ENCODE measurements at regions of chr10 and their contacts with region 1.

Region 1: GRCh38 chr10:114448897-114449296 is 44.6 kb upstream of the AFAP1L2 start:
- DNase-seq: no peak
- H3K4me3 ChIP-seq: no peak overlapping the region
- CTCF ChIP-seq: no peak

Region 2: DNA sequence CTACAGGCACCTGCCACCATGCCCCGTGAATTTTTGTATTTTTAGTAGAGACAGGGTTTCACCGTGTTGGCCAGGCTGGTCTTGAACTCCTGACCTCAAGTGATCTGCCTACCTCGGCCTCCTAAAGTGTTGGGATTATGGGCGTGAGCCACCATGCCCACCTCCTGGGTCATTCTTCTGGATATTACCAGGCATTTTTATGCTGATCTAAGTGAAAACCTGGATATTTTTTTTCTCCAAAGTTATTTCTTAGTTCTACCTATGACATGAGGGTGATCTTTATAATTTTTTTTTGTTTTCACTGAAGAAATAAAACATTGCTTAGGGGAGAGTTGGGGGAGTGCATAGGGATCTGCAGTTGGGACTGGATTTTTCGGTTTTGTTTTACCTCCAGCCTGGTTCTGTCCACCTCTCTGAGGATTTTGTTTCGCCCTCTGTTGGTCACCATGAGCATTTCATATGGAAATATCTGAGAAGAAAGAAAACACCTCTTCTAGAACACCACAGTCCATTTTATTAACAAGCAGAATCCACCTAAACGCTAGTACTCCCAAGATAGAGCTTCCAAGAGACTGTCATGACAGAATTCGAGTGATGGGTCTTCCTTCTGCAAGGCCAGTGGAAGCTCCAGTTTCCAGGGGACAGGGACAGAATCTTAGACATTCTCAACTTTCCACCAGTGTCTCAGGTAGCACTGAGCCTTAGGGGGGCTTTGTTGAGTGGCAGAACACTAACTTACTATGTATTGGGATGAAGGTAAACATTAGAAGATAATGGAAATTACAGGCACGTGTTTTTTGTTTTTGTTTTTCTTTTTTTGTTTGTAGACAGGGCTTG is 11.2 kb before region 1 on chr10:
- CTCF ChIA-PET with region 1: interaction called, 18 read pairs
- POLR2A ChIA-PET with region 1: no interaction called
- DNase-seq: no peak
- H3K4me3 ChIP-seq: no peak overlapping the region
- CTCF ChIP-seq: peak; percentile 40